Activated naive CD4-positive, alpha-beta T cell treated with anti-CD3 and anti-CD28 coated beads for 36 hours (primary cell): ENCODE measurements at regions of chr15 and their contacts with region 1.

Region 1: GRCh38 chr15:44663409-44664308 is at the start of gene SPG11:
- DNase-seq: peak; percentile 99
- H3K4me3 Mint-ChIP-seq: peak within 1 kb of the TSS; percentile 97
- H3K27ac Mint-ChIP-seq: peak within 1 kb of the TSS; percentile 94
- H3K4me1 Mint-ChIP-seq: peaks cover 53% of the 10 kb centered on the region
- H3K27me3 Mint-ChIP-seq: no peaks in the 10 kb centered on the region
- total RNA-seq, gene SPG11: 83.2 to 96.4 TPM

Region 2: GRCh38 chr15:44584162-44584749 is 79.4 kb before region 1 on chr15:
- CTCF ChIA-PET with region 1: interaction called, 4 read pairs
- intact Hi-C with region 1: loop called (anchors 1 kb)
- DNase-seq: peak; percentile 77
- H3K4me3 Mint-ChIP-seq: no peak overlapping the region
- H3K27ac Mint-ChIP-seq: no peak overlapping the region
- H3K4me1 Mint-ChIP-seq: peaks cover 7% of the 10 kb centered on the region
- H3K27me3 Mint-ChIP-seq: no peaks in the 10 kb centered on the region

Region 3: GRCh38 chr15:44633603-44634002 is 30.1 kb before region 1 on chr15:
- CTCF ChIA-PET with region 1: interaction called, 8 read pairs
- intact Hi-C with region 1: loop called (anchors 1 kb)
- DNase-seq: peak; percentile 34
- H3K4me3 Mint-ChIP-seq: peak overlapping the region; percentile 65
- H3K27ac Mint-ChIP-seq: peak overlapping the region; percentile 98
- H3K4me1 Mint-ChIP-seq: peaks cover 34% of the 10 kb centered on the region
- H3K27me3 Mint-ChIP-seq: no peaks in the 10 kb centered on the region

Region 4: GRCh38 chr15:44682211-44682610 is 18.6 kb after region 1 on chr15:
- CTCF ChIA-PET with region 1: interaction called, 29 read pairs
- intact Hi-C with region 1: loop called (anchors 2 kb)
- DNase-seq: no peak
- H3K4me3 Mint-ChIP-seq: peak overlapping the region; percentile 37
- H3K27ac Mint-ChIP-seq: peak overlapping the region; percentile 87
- H3K4me1 Mint-ChIP-seq: peaks cover 80% of the 10 kb centered on the region
- H3K27me3 Mint-ChIP-seq: no peaks in the 10 kb centered on the region

Region 5: DNA sequence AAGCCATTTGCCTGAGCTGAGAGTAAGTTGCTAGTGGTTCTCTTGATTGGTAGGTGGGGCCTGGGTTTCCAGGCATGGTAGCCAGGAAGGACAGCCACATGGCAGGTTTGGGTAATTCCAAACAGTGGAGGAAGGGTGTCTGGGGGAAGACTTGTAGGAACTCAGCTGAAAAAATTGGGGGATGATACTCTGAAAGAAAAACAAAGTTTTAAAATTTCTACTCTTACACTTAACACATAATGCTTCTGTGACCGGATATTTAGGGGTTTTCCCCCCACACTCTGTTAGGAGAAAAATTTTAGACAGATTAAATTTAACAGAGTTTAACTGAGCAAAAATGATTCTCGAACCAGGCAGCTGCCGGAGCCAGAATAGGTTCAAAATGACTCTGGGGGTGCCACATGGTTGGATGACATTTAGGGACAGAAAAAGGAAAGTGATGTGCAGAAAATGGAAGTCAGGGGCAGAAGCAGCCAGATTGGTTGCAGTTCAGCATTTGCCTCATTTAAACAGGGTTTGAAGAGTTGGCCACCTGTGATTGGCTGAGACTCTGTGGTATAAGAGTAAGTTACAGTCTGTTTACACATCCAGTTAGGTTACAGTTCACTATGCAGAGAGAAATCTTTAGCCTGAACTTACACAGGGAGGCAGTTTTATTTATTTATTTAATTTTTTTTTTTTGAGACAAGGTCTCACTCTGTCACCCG is 55.8 kb after region 1 on chr15:
- CTCF ChIA-PET with region 1: interaction called, 200 read pairs
- intact Hi-C with region 1: loop called (anchors 2 kb)
- DNase-seq: peak; percentile 90
- H3K4me3 Mint-ChIP-seq: peak overlapping the region; percentile 58
- H3K27ac Mint-ChIP-seq: peak overlapping the region; percentile 100
- H3K4me1 Mint-ChIP-seq: peaks cover 88% of the 10 kb centered on the region
- H3K27me3 Mint-ChIP-seq: no peaks in the 10 kb centered on the region

Region 6: GRCh38 chr15:44738340-44738984 is 74.8 kb after region 1 on chr15:
- CTCF ChIA-PET with region 1: interaction called, 132 read pairs
- intact Hi-C with region 1: loop called (anchors 1 kb)
- DNase-seq: no peak
- H3K4me3 Mint-ChIP-seq: peak overlapping the region; percentile 12
- H3K27ac Mint-ChIP-seq: peak overlapping the region; percentile 78
- H3K4me1 Mint-ChIP-seq: peaks cover 51% of the 10 kb centered on the region
- H3K27me3 Mint-ChIP-seq: no peaks in the 10 kb centered on the region